WTC11 (cell line): ENCODE measurements at regions of chr18 and their contacts with region 1.

Region 1: GRCh38 chr18:74495581-74496507 is at the start of gene CNDP2:
- DNase-seq: peak; percentile 100
- ATAC-seq: peak; percentile 92
- H3K4me3 Mint-ChIP-seq: peak within 1 kb of the TSS; percentile 96
- H3K27ac Mint-ChIP-seq: peak within 1 kb of the TSS; percentile 98
- H3K4me1 Mint-ChIP-seq: peaks cover 38% of the 10 kb centered on the region
- H3K27me3 Mint-ChIP-seq: no peaks in the 10 kb centered on the region
- CTCF ChIP-seq: no peak
- total RNA-seq, gene CNDP2: 228 to 248 TPM (median 229 TPM) in 3 replicates

Region 2: GRCh38 chr18:74196220-74197119 is 299.4 kb before region 1 on chr18:
- CTCF ChIA-PET with region 1: interaction called, 16 read pairs
- POLR2A ChIA-PET with region 1: interaction called, 4 read pairs
- DNase-seq: no peak
- ATAC-seq: peak; percentile 80
- H3K4me3 Mint-ChIP-seq: peak overlapping the region; percentile 54
- H3K27ac Mint-ChIP-seq: peak overlapping the region; percentile 88
- H3K4me1 Mint-ChIP-seq: peaks cover 19% of the 10 kb centered on the region
- H3K27me3 Mint-ChIP-seq: no peaks in the 10 kb centered on the region
- CTCF ChIP-seq: peak; percentile 80

Region 3: DNA sequence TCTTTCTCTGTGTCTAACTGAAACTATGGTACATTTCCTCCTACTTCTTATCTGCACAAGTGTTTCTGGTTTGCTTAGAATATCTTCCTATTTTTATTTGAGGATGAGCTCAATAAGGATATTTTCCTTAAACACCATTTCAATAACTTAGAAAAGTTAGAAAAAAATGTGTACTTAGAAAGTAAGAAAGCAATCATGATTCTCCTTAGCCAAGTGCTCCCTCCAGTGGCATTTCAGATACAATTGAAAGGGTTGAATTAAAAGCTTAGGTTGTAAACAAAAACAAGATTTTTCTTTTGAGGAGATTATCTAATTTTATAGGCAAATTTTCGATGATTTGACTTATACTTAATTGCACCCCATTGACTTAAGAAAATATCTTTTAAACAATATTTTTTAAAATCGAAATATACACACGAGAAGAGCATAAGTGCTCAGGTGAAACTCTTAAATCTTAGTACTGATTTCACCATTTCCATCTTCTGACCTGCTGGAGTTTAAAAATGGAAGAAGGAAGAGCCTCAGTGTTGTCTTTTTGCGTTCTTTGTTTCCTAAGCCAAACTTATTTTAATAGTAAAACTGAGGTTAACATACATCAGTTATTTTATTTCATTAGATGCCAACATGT is 153.3 kb before region 1 on chr18:
- CTCF ChIA-PET with region 1: interaction called, 12 read pairs
- POLR2A ChIA-PET with region 1: no interaction called
- DNase-seq: no peak
- ATAC-seq: no peak
- H3K4me3 Mint-ChIP-seq: no peak overlapping the region
- H3K27ac Mint-ChIP-seq: no peak overlapping the region
- H3K4me1 Mint-ChIP-seq: peaks cover 7% of the 10 kb centered on the region; the same call in 1 of the 2 replicates
- H3K27me3 Mint-ChIP-seq: no peaks in the 10 kb centered on the region
- CTCF ChIP-seq: peak; percentile 46

Region 4: GRCh38 chr18:74353169-74353775 is 142.6 kb before region 1 on chr18:
- CTCF ChIA-PET with region 1: interaction called, 79 read pairs
- POLR2A ChIA-PET with region 1: interaction called, 3 read pairs
- DNase-seq: peak; percentile 53
- ATAC-seq: peak; percentile 93
- H3K4me3 Mint-ChIP-seq: no peak overlapping the region
- H3K27ac Mint-ChIP-seq: no peak overlapping the region
- H3K4me1 Mint-ChIP-seq: peaks cover 3% of the 10 kb centered on the region
- H3K27me3 Mint-ChIP-seq: no peaks in the 10 kb centered on the region
- CTCF ChIP-seq: no peak

Region 5: DNA sequence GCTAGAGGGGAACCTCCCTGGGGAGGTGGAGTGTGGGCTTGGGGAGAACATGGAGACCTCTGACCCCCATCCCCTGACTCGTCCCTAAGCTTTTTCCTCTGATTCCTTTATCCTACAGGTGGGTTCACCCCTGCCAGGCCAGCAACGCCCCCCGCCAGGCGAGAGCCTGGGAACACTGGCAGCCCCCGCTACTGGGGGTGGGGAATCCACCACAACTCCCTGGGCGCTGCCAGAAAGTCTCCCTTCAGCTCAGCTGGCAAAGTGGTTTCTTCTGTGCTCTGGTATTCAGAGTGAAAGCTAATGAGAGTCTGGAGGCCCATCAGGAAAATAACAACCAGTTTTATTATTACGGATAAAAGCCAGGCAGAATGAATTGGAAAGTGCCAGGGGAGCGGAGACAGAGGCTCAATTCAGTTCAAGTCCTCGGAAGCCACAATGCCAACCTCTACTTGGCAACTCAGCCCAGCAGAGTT is 41.5 kb before region 1 on chr18:
- CTCF ChIA-PET with region 1: interaction called, 27 read pairs
- POLR2A ChIA-PET with region 1: no interaction called
- DNase-seq: no peak
- ATAC-seq: no peak
- H3K4me3 Mint-ChIP-seq: no peak overlapping the region
- H3K27ac Mint-ChIP-seq: no peak overlapping the region
- H3K4me1 Mint-ChIP-seq: peaks cover 3% of the 10 kb centered on the region
- H3K27me3 Mint-ChIP-seq: peaks cover 56% of the 10 kb centered on the region
- CTCF ChIP-seq: no peak

Region 6: GRCh38 chr18:74459889-74460288 is 36.0 kb before region 1 on chr18:
- CTCF ChIA-PET with region 1: interaction called, 27 read pairs
- POLR2A ChIA-PET with region 1: no interaction called
- DNase-seq: peak; percentile 53
- ATAC-seq: peak; percentile 83
- H3K4me3 Mint-ChIP-seq: no peak overlapping the region
- H3K27ac Mint-ChIP-seq: no peak overlapping the region
- H3K4me1 Mint-ChIP-seq: peaks cover 3% of the 10 kb centered on the region
- H3K27me3 Mint-ChIP-seq: peaks cover 45% of the 10 kb centered on the region
- CTCF ChIP-seq: 0 out of 2 replicates have a peak, but pooled peaks have one; percentile 28

Region 7: DNA sequence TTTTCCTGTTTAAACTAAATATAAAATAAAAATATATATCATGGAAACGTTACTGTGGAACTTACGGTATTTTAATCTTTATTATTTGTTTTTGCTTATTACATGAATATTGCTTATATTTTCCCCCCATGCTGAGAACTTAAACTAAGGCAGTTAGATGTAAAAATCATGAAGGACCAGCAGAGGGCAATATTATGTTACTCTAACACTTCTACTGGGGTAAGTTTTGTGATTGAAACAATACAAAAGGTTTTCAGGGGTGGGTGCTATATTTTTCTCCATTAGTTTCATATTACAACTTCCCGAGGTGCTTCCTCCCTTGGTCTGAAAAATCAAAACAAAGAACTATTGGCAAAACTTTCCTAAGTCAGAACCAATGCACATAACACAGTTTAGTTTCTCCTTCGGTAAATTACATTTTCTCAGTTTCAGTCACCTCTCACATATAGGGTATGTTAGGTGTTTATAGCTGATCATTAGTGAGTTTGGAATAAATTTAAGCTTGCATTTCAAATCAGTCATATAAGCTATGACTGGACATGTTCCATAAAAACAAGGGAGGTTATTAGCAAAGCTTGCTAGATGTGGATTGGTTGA is 156.6 kb after region 1 on chr18:
- CTCF ChIA-PET with region 1: no interaction called
- POLR2A ChIA-PET with region 1: no interaction called
- DNase-seq: no peak
- ATAC-seq: peak; percentile 20; the same call in 1 of the 2 replicates
- H3K4me3 Mint-ChIP-seq: no peak overlapping the region
- H3K27ac Mint-ChIP-seq: no peak overlapping the region
- H3K4me1 Mint-ChIP-seq: peaks cover 21% of the 10 kb centered on the region
- H3K27me3 Mint-ChIP-seq: no peaks in the 10 kb centered on the region
- CTCF ChIP-seq: 0 out of 2 replicates have a peak, but pooled peaks have one; percentile 25